ENCODE measurements at regions of chr19 and their contacts with region 1.

Region 1: GRCh38 chr19:49929611-49930482 is 543 bp upstream of the NUP62 start:
- DNase-seq: peak; percentile 97
- ATAC-seq: peak; percentile 91
- H3K4me3 Mint-ChIP-seq: peak overlapping the region; percentile 96
- H3K27ac Mint-ChIP-seq: peak overlapping the region; percentile 98
- H3K4me1 Mint-ChIP-seq: peaks cover 59% of the 10 kb centered on the region
- H3K27me3 Mint-ChIP-seq: no peaks in the 10 kb centered on the region

Region 2: DNA sequence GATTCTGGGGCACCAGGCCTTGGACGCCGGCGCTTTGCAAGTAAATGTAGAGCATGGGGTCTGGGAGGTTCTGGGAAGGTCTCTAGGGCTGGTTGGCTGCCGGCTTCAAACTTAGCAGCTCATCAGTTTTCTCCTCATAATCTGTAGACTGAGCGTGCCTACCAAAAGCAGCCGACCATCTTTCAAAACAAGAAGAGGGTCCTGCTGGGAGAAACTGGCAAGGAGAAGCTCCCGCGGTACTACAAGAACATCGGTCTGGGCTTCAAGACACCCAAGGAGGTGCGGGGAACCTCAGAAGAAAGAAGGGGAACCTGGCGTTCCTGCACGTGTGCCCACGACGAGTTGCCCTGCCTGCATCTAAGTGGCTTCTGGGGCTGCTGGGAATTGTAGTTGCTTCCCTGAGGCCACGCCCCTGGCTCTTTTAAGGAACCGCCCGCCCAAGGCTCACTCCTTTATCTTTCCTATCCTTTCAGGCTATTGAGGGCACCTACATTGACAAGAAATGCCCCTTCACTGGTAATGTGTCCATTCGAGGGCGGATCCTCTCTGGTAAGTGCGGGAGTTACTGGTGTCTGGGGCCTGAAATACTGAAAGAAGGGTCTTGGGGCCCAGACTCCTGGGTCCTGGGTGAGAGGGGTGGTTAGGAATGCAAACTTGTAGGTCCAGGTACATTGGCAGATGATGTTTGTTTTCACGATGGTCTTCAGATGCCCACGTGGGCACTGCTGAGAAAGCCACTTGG is 432.6 kb before region 1 on chr19:
- CTCF ChIA-PET with region 1: no interaction called
- POLR2A ChIA-PET with region 1: no interaction called
- intact Hi-C with region 1: loop called in 1 of 2 experiments (anchors 1 kb)
- DNase-seq: peak; percentile 86
- ATAC-seq: peak; percentile 5
- H3K4me3 Mint-ChIP-seq: peak overlapping the region; percentile 93
- H3K27ac Mint-ChIP-seq: peak overlapping the region; percentile 98
- H3K4me1 Mint-ChIP-seq: peaks cover 47% of the 10 kb centered on the region
- H3K27me3 Mint-ChIP-seq: no peaks in the 10 kb centered on the region

Region 3: GRCh38 chr19:49665351-49666119 is 264.3 kb before region 1 on chr19 and contains the starts of genes BCL2L12 and IRF3:
- CTCF ChIA-PET with region 1: no interaction called
- POLR2A ChIA-PET with region 1: no interaction called
- intact Hi-C with region 1: loop called in 1 of 2 experiments (anchors 1 kb)
- DNase-seq: peak; percentile 100
- ATAC-seq: peak; percentile 86
- H3K4me3 Mint-ChIP-seq: peak within 1 kb of the TSS; percentile 96
- H3K27ac Mint-ChIP-seq: peak within 1 kb of the TSS; percentile 92
- H3K4me1 Mint-ChIP-seq: peaks cover 29% of the 10 kb centered on the region
- H3K27me3 Mint-ChIP-seq: no peaks in the 10 kb centered on the region
- total RNA-seq, gene BCL2L12: 79.6 to 93.8 TPM
- total RNA-seq, gene IRF3: 123 to 125 TPM

Region 4: GRCh38 chr19:49850473-49851342 is 79.1 kb before region 1 on chr19 and contains the start of gene PTOV1:
- CTCF ChIA-PET with region 1: no interaction called
- POLR2A ChIA-PET with region 1: interaction called, 5 read pairs
- intact Hi-C with region 1: loop called in 1 of 2 experiments (anchors 1 kb)
- DNase-seq: peak; percentile 95
- ATAC-seq: peak; percentile 91
- H3K4me3 Mint-ChIP-seq: peak within 1 kb of the TSS; percentile 85
- H3K27ac Mint-ChIP-seq: peak within 1 kb of the TSS; percentile 91
- H3K4me1 Mint-ChIP-seq: peaks cover 36% of the 10 kb centered on the region
- H3K27me3 Mint-ChIP-seq: no peaks in the 10 kb centered on the region
- total RNA-seq, gene PTOV1: 76.9 to 104 TPM

Region 5: GRCh38 chr19:49889687-49890348 is 40.0 kb before region 1 on chr19:
- CTCF ChIA-PET with region 1: interaction called, 3 read pairs
- POLR2A ChIA-PET with region 1: interaction called, 3 read pairs
- intact Hi-C with region 1: loop called (anchors 1 to 5 kb)
- DNase-seq: peak; percentile 89
- ATAC-seq: peak; percentile 61
- H3K4me3 Mint-ChIP-seq: peak overlapping the region; percentile 69
- H3K27ac Mint-ChIP-seq: peak overlapping the region; percentile 70
- H3K4me1 Mint-ChIP-seq: peaks cover 16% of the 10 kb centered on the region
- H3K27me3 Mint-ChIP-seq: no peaks in the 10 kb centered on the region

Region 6: GRCh38 chr19:49911381-49912145 is 18.3 kb before region 1 on chr19:
- CTCF ChIA-PET with region 1: interaction called, 6 read pairs
- POLR2A ChIA-PET with region 1: interaction called, 12 read pairs
- intact Hi-C with region 1: no loop called
- DNase-seq: peak; percentile 58
- ATAC-seq: peak; percentile 88
- H3K4me3 Mint-ChIP-seq: peak overlapping the region; percentile 34
- H3K27ac Mint-ChIP-seq: peak overlapping the region; percentile 92
- H3K4me1 Mint-ChIP-seq: peaks cover 56% of the 10 kb centered on the region
- H3K27me3 Mint-ChIP-seq: no peaks in the 10 kb centered on the region

Region 7: DNA sequence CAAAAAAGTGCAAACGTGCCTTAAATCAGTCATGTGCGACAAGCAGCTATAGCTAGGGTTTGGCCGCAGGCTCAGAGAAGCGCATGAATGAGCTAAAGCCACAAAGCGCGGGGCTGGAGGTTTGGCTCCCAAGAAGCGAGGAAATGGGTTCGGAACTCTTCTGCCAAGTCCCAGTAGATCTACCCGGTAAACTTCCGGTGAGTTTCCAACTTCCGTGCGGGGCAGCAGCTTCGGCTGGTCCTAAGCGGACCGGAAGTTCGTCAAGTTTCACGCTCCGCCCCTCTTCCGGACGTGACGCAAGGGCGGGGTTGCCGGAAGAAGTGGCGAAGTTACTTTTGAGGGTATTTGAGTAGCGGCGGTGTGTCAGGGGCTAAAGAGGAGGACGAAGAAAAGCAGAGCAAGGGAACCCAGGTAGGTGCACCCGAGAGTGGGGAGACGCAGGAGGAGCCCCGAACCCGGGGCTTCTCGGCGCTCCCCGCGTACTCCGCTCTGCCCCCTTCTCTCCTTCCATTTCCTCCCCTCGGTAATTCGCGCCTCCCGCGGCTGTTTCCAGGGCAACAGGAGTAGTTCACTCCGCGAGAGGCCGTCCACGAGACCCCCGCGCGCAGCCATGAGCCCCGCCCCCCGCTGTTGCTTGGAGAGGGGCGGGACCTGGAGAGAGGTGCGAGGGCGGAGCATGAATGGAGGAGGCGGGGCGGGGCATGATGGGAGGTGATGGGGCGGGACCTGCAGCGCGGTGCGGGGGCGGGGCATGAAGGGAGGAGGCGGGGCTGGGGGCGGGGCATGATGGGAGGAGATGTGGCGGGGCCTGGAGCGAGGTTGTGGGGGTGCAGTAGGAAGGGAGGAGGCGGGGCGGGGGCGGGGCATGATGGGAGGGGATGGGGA is 446.6 kb after region 1 on chr19 and contains the start of gene NR1H2:
- CTCF ChIA-PET with region 1: no interaction called
- POLR2A ChIA-PET with region 1: interaction called, 7 read pairs
- intact Hi-C with region 1: loop called in 1 of 2 experiments (anchors 1 kb)
- DNase-seq: peak; percentile 97
- ATAC-seq: peak; percentile 89
- H3K4me3 Mint-ChIP-seq: peak within 1 kb of the TSS; percentile 89
- H3K27ac Mint-ChIP-seq: peak within 1 kb of the TSS; percentile 97
- H3K4me1 Mint-ChIP-seq: peaks cover 21% of the 10 kb centered on the region
- H3K27me3 Mint-ChIP-seq: no peaks in the 10 kb centered on the region
- total RNA-seq, gene NR1H2: 50.3 to 53.6 TPM